ENCODE measurements at regions of chr13 and their contacts with region 1.

Region 1: DNA sequence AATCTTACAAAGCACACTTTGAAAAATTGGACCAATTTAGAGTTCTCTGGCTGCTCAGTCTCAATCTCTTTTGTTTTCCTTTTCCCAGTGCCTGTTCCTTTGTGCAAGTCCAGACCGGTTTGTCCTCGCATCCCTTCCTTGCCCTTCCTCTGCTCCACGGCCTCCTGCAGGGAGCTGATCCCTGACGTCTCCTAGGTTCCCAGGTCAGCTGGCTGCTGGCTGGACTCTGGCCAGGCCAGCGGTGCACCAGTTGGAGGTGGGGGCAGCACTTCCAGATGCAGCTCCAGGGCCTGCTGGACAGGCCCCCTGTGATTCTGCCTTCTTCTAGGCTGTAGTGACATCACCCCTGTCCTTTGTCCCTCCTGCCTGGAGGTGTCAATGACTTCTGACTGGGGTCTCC is 44.0 kb upstream of the KPNA3 start:
- DNase-seq: no peak
- H3K4me3 ChIP-seq: no peak overlapping the region
- H3K27ac ChIP-seq: no peak overlapping the region
- H3K4me1 ChIP-seq: no peaks in the 10 kb centered on the region
- H3K27me3 ChIP-seq: no peaks in the 10 kb centered on the region
- CTCF ChIP-seq: no peak
- POLR2A ChIP-seq: no peak

Region 2: GRCh38 chr13:49655906-49656305 is 180.6 kb before region 1 on chr13:
- intact Hi-C with region 1: loop called in 1 of 2 experiments (anchors 5 kb)
- DNase-seq: no peak
- H3K4me3 ChIP-seq: no peak overlapping the region
- H3K27ac ChIP-seq: no peak overlapping the region
- H3K4me1 ChIP-seq: no peaks in the 10 kb centered on the region
- H3K27me3 ChIP-seq: no peaks in the 10 kb centered on the region
- CTCF ChIP-seq: no peak
- POLR2A ChIP-seq: no peak

Region 3: DNA sequence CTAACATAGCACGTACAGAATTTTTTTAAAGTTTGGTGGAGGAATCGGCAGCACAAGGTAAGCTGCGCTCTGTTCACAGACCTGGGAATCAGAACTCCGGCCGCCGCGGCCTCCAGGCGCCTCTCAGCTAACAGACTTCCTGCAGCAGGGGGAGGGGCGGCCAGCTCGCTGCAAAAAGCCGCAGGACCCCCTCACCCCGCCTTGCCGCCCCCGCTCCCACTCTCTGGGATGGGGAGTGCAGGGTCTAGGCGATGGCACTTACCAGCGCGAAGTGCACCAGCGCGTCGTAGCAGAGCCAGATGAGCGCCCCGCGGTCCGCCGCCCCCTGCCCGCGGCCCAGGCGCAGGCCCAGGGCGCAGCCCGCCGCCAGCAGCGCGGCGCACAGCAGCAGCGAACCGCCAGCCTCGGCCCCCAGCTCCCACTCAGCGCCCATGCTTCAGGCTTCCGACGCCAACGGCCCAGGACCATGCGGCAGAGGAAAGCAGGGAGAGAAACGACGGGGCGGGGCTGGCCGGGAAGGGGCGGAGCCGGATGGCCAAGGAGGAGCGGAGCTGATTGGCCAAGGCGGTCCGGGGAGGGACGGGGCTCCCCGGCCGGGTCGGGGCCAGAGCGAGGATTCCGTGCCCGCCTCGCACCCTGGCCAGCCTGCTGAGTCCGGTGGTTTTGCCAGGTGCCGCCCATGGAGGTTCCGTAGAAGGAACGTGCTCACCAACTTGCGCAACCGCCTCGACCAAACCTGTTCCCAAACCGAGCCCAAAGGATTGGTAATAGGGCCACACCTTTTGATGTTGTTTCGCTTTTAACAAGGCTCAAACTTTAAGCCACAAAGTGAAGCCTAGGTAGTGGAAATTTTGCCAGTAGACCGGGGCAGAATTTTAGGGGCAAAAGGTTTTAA is 145.3 kb before region 1 on chr13 and contains the start of gene EBPL:
- intact Hi-C with region 1: no loop called
- DNase-seq: peak; percentile 93 to 97 (median 95)
- H3K4me3 ChIP-seq: peak within 1 kb of the TSS; percentile 15 to 91 (median 62)
- H3K27ac ChIP-seq: peak within 1 kb of the TSS; percentile 46 to 87 (median 75)
- H3K4me1 ChIP-seq: peaks cover 4 to 20% of the 10 kb centered on the region in 2 donors
- H3K27me3 ChIP-seq: no peaks in the 10 kb centered on the region
- CTCF ChIP-seq: no peak
- POLR2A ChIP-seq: peak in 1 of 2 donors; percentile 75
- total RNA-seq, gene EBPL: 45.2 to 302 (median 173) TPM

Region 4: DNA sequence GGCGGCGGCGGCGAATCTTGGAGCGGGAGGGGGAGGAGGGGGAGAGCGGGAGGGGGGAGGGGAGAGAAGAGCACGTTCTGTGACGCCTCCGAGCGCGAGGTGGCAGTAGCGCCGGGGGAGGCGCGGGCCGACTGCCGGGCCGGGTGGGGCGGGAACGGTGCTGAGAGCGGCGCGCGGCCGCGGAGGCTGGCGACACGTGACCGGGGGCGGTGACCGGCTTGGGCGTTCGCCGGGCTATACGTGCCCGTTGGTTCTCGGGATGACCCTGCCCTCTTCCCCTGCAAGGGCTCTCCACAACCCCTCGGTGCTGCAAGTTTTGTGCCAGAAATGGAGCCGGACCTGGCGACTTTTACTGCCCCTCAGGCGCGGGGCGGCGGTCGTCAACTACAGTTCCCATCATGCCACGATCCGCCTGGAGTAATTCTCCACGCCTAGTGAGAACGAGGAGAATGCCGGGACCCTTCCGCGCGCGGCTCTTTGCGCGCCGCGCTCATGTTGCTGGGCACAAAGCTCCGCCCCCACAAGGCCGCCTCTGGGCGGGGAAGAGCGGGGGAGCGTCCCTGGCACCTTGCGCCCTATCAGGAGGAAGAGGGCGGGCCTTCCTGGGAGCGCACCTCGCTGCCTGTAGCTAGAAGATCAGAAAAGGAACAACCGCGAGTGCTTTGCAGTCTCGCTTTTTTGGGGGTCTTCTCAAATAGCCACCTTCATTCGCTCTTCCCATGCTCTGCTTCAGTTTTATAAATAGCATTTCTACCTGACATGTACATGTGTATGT is 43.8 kb before region 1 on chr13 and contains the start of gene KPNA3:
- intact Hi-C with region 1: loop called in 1 of 2 experiments (anchors 10 kb)
- DNase-seq: peak; percentile 96 to 98 (median 97)
- H3K4me3 ChIP-seq: peak within 1 kb of the TSS; percentile 55 to 90 (median 77)
- H3K27ac ChIP-seq: peak within 1 kb of the TSS; percentile 79 to 97 (median 96)
- H3K4me1 ChIP-seq: peaks cover 0 to 16% of the 10 kb centered on the region in 2 donors
- H3K27me3 ChIP-seq: no peaks in the 10 kb centered on the region
- CTCF ChIP-seq: no peak
- POLR2A ChIP-seq: peak; percentile 63 to 86
- total RNA-seq, gene KPNA3: 12.6 to 38.4 (median 21.3) TPM

Region 5: DNA sequence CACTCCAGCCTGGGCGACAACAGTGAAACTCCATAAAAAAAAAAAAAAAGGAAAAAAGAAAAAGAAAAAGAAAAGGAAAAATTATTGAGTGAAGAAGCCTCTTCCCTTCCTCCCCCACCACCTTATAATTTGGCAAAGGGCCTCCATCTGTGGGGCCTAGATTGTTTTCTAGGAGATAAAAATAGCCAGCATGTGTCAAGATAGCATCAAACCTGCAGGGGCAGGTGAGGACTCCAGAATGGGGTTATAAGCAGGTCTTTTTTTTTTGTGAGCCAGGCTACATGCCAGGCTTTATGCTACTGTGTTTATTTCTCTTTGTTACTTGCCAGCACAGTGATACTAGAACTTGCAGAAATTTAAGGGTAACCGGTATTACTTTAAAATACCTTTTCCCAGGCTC is 148.6 kb after region 1 on chr13:
- intact Hi-C with region 1: no loop called
- DNase-seq: no peak
- H3K4me3 ChIP-seq: no peak overlapping the region
- H3K27ac ChIP-seq: no peak overlapping the region
- H3K4me1 ChIP-seq: no peaks in the 10 kb centered on the region
- H3K27me3 ChIP-seq: no peaks in the 10 kb centered on the region
- CTCF ChIP-seq: no peak
- POLR2A ChIP-seq: no peak